ENCODE measurements at regions of chr12 and their contacts with region 1.

Region 1: GRCh38 chr12:6851921-6852650 is at the start of gene USP5:
- DNase-seq: peak; percentile 98
- ATAC-seq: peak; percentile 77
- H3K4me3 ChIP-seq: peak within 1 kb of the TSS; percentile 86
- H3K27ac ChIP-seq: peak within 1 kb of the TSS; percentile 61
- H3K4me1 ChIP-seq: peaks cover 23% of the 10 kb centered on the region
- H3K27me3 ChIP-seq: no peaks in the 10 kb centered on the region
- CTCF ChIP-seq: no peak
- total RNA-seq, gene USP5: 107 and 113 TPM in 2 replicates

Region 2: DNA sequence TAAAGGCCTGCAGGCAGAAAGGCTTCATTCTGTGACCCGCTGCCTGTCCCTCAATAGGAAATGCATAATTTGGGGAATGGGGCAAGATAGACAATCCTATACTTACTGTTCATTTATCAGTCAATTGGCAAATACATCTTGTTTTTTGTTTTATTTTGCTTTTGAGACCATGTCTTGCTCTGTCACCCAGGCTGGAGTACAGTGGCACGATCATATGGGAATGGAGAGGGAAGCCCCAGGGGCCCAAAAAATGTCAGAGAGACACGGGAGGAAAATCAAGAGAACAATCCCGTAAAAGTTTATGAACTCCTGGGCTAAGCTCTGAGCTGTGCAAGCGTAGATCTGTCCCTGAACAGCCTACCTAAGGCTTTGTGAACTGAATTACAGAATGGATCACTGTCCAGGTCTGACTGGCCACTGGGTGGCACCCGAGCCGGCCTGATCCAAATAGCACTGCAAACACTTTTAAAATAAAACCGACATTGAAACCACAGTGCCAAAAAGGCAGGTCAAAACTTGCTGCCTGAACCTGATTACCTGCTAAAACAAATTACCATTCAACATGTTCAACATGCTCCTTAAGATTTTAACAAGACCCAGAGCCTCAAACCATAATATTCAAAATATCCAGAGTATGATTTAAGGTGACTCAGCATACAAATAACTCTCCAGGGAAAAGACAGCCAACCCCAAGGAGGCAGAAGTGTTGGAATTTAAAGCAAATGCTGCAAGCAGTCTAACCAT is 116.5 kb before region 1 on chr12:
- CTCF ChIA-PET with region 1: no interaction called
- POLR2A ChIA-PET with region 1: no interaction called
- intact Hi-C with region 1: no loop called
- DNase-seq: peak; percentile 63
- ATAC-seq: peak; percentile 99
- H3K4me3 ChIP-seq: no peak overlapping the region
- H3K27ac ChIP-seq: peak overlapping the region; percentile 21; the same call in 1 of the 2 replicates
- H3K4me1 ChIP-seq: peaks cover 5% of the 10 kb centered on the region
- H3K27me3 ChIP-seq: no peaks in the 10 kb centered on the region
- CTCF ChIP-seq: peak; percentile 86

Region 3: GRCh38 chr12:6752921-6753771 is 98.9 kb before region 1 on chr12 and contains the start of gene MLF2:
- CTCF ChIA-PET with region 1: interaction called, 4 read pairs
- POLR2A ChIA-PET with region 1: no interaction called
- intact Hi-C with region 1: loop called (anchors 5 kb)
- DNase-seq: peak; percentile 95
- ATAC-seq: peak; percentile 92
- H3K4me3 ChIP-seq: peak within 1 kb of the TSS; percentile 91
- H3K27ac ChIP-seq: peak within 1 kb of the TSS; percentile 89
- H3K4me1 ChIP-seq: peaks cover 12% of the 10 kb centered on the region
- H3K27me3 ChIP-seq: no peaks in the 10 kb centered on the region
- CTCF ChIP-seq: peak; percentile 88; the same call in 1 of the 2 replicates
- total RNA-seq, gene MLF2: 222 and 248 TPM in 2 replicates

Region 4: GRCh38 chr12:6873094-6874014 is 21.3 kb after region 1 on chr12 and contains the start of gene SPSB2:
- CTCF ChIA-PET with region 1: interaction called, 12 read pairs
- POLR2A ChIA-PET with region 1: interaction called, 15 read pairs
- intact Hi-C with region 1: no loop called
- DNase-seq: peak; percentile 94
- ATAC-seq: peak; percentile 68
- H3K4me3 ChIP-seq: peak within 1 kb of the TSS; percentile 78
- H3K27ac ChIP-seq: peak within 1 kb of the TSS; percentile 28; the same call in 1 of the 2 replicates
- H3K4me1 ChIP-seq: peaks cover 31% of the 10 kb centered on the region
- H3K27me3 ChIP-seq: no peaks in the 10 kb centered on the region
- CTCF ChIP-seq: no peak
- total RNA-seq, gene SPSB2: 8.4 and 9.2 TPM in 2 replicates

Region 5: GRCh38 chr12:7005311-7005710 is 153.2 kb after region 1 on chr12:
- CTCF ChIA-PET with region 1: no interaction called
- POLR2A ChIA-PET with region 1: no interaction called
- intact Hi-C with region 1: loop called (anchors 5 kb)
- DNase-seq: no peak
- ATAC-seq: no peak
- H3K4me3 ChIP-seq: no peak overlapping the region
- H3K27ac ChIP-seq: no peak overlapping the region
- H3K4me1 ChIP-seq: no peaks in the 10 kb centered on the region
- H3K27me3 ChIP-seq: no peaks in the 10 kb centered on the region
- CTCF ChIP-seq: no peak